ENCODE measurements at regions of chr1 and their contacts with region 1.

Region 1: DNA sequence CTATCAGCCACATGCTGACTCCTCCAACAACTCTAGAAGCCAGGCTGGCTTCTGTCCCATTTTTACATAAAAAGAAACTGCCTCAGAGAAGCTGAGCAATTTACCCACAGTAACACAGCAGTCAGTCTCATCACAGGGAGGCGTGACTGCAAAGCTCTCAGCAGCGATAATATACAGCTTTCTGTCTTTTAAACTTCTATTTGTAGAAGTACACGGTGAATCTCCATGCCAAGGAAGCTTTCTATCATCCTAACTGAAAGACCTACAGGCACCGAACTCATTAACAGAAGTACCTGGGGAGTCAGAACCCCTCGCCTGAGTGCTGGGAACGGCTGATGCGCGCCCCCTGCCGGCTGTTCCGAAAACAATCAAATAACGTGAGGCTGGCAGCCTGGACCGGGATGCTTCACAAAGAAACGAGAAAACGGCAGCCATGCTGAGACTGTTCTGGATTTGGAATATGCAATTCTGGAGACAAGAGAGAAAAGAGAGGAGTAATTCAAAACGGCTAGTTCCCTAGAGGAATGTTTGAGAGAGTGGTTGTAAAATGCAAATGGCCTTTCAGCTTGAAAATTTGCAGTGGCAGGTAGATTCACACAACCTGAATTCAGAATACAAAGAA is 43.5 kb upstream of the RAB4A start:
- DNase-seq: peak; percentile 77
- ATAC-seq: peak; percentile 67
- H3K4me3 ChIP-seq: no peak overlapping the region
- H3K4me3 Mint-ChIP-seq: no peak overlapping the region
- H3K27ac ChIP-seq: no peak overlapping the region
- H3K27ac Mint-ChIP-seq: no peak overlapping the region
- H3K4me1 ChIP-seq: peaks cover 4 to 5% of the 10 kb centered on the region in 2 donors
- H3K4me1 Mint-ChIP-seq: peaks cover 10% of the 10 kb centered on the region
- H3K27me3 ChIP-seq: peaks cover 0 to 34% (median 16%) of the 10 kb centered on the region in 4 experiments
- H3K27me3 Mint-ChIP-seq: peaks cover 39% of the 10 kb centered on the region
- CTCF ChIP-seq: peak; percentile 90

Region 2: GRCh38 chr1:228664399-228664914 is 563.0 kb before region 1 on chr1:
- CTCF ChIA-PET with region 1: interaction called, 147 read pairs
- POLR2A ChIA-PET with region 1: no interaction called
- intact Hi-C with region 1: no loop called
- DNase-seq: peak; percentile 79
- ATAC-seq: peak; percentile 43
- H3K4me3 ChIP-seq: no peak overlapping the region
- H3K4me3 Mint-ChIP-seq: no peak overlapping the region
- H3K27ac ChIP-seq: no peak overlapping the region
- H3K27ac Mint-ChIP-seq: no peak overlapping the region
- H3K4me1 ChIP-seq: no peaks in the 10 kb centered on the region
- H3K4me1 Mint-ChIP-seq: no peaks in the 10 kb centered on the region
- H3K27me3 ChIP-seq: peaks cover 0 to 8% (median 2%) of the 10 kb centered on the region in 4 experiments
- H3K27me3 Mint-ChIP-seq: peaks cover 22% of the 10 kb centered on the region
- CTCF ChIP-seq: peak; percentile 95

Region 3: DNA sequence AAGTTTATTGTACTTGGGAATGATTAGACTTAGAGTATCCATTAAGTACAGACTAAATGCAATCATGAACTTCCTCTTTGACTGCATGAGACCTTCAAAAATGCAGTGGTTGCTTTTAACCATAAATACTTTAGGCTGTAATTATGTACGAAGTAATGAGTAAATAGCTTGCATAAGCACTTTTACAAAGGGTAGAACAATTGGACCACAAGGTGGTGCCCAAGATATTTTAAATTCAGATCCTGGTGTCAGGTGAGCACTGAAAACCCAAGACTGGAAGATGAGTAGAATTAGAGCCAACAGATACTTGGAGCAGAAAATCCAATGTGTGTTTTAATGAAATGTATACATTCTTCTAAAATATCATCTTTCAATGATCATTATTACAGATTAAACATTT is 535.5 kb before region 1 on chr1:
- CTCF ChIA-PET with region 1: interaction called, 30 read pairs
- POLR2A ChIA-PET with region 1: no interaction called
- intact Hi-C with region 1: no loop called
- DNase-seq: peak; percentile 39
- ATAC-seq: no peak
- H3K4me3 ChIP-seq: no peak overlapping the region
- H3K4me3 Mint-ChIP-seq: no peak overlapping the region
- H3K27ac ChIP-seq: no peak overlapping the region
- H3K27ac Mint-ChIP-seq: no peak overlapping the region
- H3K4me1 ChIP-seq: no peaks in the 10 kb centered on the region
- H3K4me1 Mint-ChIP-seq: no peaks in the 10 kb centered on the region
- H3K27me3 ChIP-seq: peaks cover 0 to 2% (median 0%) of the 10 kb centered on the region in 4 experiments
- H3K27me3 Mint-ChIP-seq: peaks cover 24% of the 10 kb centered on the region
- CTCF ChIP-seq: peak; percentile 25

Region 4: GRCh38 chr1:229410692-229411443 is 183.5 kb after region 1 on chr1:
- CTCF ChIA-PET with region 1: no interaction called
- POLR2A ChIA-PET with region 1: no interaction called
- intact Hi-C with region 1: no loop called
- DNase-seq: no peak
- ATAC-seq: peak; percentile 28
- H3K4me3 ChIP-seq: no peak overlapping the region
- H3K4me3 Mint-ChIP-seq: no peak overlapping the region
- H3K27ac ChIP-seq: no peak overlapping the region
- H3K27ac Mint-ChIP-seq: peak overlapping the region; percentile 43
- H3K4me1 ChIP-seq: peaks cover 12 to 15% of the 10 kb centered on the region in 2 donors
- H3K4me1 Mint-ChIP-seq: peaks cover 18% of the 10 kb centered on the region
- H3K27me3 ChIP-seq: peaks cover 0 to 45% (median 23%) of the 10 kb centered on the region in 4 experiments
- H3K27me3 Mint-ChIP-seq: peaks cover 36% of the 10 kb centered on the region
- CTCF ChIP-seq: no peak

Region 5: DNA sequence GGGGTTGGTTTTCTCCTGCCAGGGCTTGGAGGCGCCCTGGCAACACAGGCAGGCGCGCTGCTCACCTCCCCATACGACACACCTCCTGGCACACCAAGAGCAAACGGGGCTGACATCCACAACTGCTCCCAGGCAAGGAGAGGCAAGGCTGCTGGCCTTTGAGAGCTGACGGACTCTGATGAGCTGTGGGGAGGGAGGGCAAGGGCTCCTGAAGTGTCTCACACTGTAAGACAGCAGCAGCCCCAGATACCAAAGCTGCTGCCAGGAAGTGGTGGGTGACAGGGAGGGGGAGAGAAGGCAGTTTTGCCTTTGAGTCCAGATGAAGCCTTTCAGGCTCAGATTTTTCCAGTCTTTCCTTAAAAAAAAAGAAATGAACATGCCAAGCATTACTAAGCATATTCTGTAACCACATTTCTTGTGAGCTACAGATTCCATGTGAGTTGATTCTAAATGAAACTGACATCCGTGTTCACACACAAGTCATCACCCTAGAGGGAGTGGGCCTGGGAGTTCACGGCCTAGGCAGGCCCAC is 1174.4 kb after region 1 on chr1:
- CTCF ChIA-PET with region 1: no interaction called
- POLR2A ChIA-PET with region 1: interaction called, 11 read pairs
- intact Hi-C with region 1: no loop called
- DNase-seq: no peak
- ATAC-seq: no peak
- H3K4me3 ChIP-seq: no peak overlapping the region
- H3K4me3 Mint-ChIP-seq: no peak overlapping the region
- H3K27ac ChIP-seq: no peak overlapping the region
- H3K27ac Mint-ChIP-seq: no peak overlapping the region
- H3K4me1 ChIP-seq: no peaks in the 10 kb centered on the region
- H3K4me1 Mint-ChIP-seq: no peaks in the 10 kb centered on the region
- H3K27me3 ChIP-seq: peaks cover 0 to 19% (median 5%) of the 10 kb centered on the region in 4 experiments
- H3K27me3 Mint-ChIP-seq: peaks cover 36% of the 10 kb centered on the region
- CTCF ChIP-seq: no peak

Measured in B cell (primary cell).